ENCODE measurements at regions of chr14 and their contacts with region 1.

Region 1: DNA sequence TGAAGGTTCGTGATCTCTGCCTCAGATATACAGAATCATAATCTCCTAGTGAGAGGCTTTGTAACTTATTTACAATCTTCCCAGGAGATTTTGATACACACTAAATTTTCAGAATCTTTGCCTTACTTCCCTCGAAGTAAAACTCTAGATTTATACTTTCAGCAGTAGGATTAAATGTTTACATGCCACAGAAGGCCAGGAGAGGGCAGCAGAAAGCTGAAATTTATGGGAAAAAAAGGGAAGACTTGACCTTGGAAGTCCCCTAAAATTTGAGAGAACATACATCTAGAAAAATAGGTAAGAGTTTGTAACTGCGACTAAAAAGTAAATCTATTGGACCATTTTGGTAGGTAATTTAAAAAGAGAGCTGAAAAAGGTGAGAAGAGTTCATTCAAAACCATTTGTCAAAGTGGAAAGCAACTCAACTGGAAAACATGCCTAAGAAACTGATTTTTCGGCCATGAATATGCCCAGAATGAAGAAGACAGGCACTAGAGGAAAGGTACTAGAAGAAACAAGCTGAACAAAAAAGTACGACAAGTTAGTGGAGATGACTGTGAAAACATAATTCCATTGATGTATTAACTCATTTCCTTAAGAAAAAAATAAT is 242.0 kb upstream of the MDGA2 start:
- DNase-seq: no peak
- ATAC-seq: no peak
- H3K4me3 ChIP-seq: no peak overlapping the region
- H3K27ac ChIP-seq: no peak overlapping the region
- H3K4me1 ChIP-seq: no peaks in the 10 kb centered on the region
- H3K27me3 ChIP-seq: peaks cover 0 to 3% (median 0%) of the 10 kb centered on the region in 7 donors
- CTCF ChIP-seq: peak in 8 of 9 donors; percentile 26 to 62 (median 51)

Region 2: GRCh38 chr14:48398675-48399282 is 481.3 kb after region 1 on chr14:
- intact Hi-C with region 1: loop called in 2 of 10 experiments (anchors 5 to 10 kb)
- DNase-seq: no peak
- ATAC-seq: no peak
- H3K4me3 ChIP-seq: no peak overlapping the region
- H3K27ac ChIP-seq: no peak overlapping the region
- H3K4me1 ChIP-seq: no peaks in the 10 kb centered on the region
- H3K27me3 ChIP-seq: no peaks in the 10 kb centered on the region
- CTCF ChIP-seq: peak in 8 of 9 donors; percentile 32 to 66 (median 57)

Region 3: GRCh38 chr14:49173765-49174373 is 1256.4 kb after region 1 on chr14:
- intact Hi-C with region 1: loop called in 2 of 10 experiments (anchors 5 to 10 kb)
- DNase-seq: peak in 1 of 2 donors; percentile 30
- ATAC-seq: peak in 4 of 8 donors; percentile 38 to 65 (median 58)
- H3K4me3 ChIP-seq: no peak overlapping the region
- H3K27ac ChIP-seq: no peak overlapping the region
- H3K4me1 ChIP-seq: no peaks in the 10 kb centered on the region
- H3K27me3 ChIP-seq: no peaks in the 10 kb centered on the region
- CTCF ChIP-seq: peak in 8 of 9 donors; percentile 25 to 60 (median 53)

Measured in heart right ventricle (tissue), 16 donors.